Activated T-helper 1 cell treated with anti-CD3 and anti-CD28 coated beads, Interleukin-12 subunit alpha, Interleukin-12 subunit beta, Interleukin-2, Interleukin-4 antibody, amounts not matched to agents 30 ng/mL and 10 ng/mL and 1 ng/mL, durations not matched to agents 14 hours and 24 hours and 36 hours (primary cell): ENCODE measurements at regions of chr1 and their contacts with region 1.

Region 1: GRCh38 chr1:234963180-234963903 is 165.3 kb downstream of the TOMM20 start:
- DNase-seq: peak; percentile 87
- H3K4me3 Mint-ChIP-seq: peak overlapping the region; percentile 73
- H3K27ac Mint-ChIP-seq: peak overlapping the region; percentile 93
- H3K4me1 Mint-ChIP-seq: peaks cover 76% of the 10 kb centered on the region
- H3K27me3 Mint-ChIP-seq: no peaks in the 10 kb centered on the region

Region 2: DNA sequence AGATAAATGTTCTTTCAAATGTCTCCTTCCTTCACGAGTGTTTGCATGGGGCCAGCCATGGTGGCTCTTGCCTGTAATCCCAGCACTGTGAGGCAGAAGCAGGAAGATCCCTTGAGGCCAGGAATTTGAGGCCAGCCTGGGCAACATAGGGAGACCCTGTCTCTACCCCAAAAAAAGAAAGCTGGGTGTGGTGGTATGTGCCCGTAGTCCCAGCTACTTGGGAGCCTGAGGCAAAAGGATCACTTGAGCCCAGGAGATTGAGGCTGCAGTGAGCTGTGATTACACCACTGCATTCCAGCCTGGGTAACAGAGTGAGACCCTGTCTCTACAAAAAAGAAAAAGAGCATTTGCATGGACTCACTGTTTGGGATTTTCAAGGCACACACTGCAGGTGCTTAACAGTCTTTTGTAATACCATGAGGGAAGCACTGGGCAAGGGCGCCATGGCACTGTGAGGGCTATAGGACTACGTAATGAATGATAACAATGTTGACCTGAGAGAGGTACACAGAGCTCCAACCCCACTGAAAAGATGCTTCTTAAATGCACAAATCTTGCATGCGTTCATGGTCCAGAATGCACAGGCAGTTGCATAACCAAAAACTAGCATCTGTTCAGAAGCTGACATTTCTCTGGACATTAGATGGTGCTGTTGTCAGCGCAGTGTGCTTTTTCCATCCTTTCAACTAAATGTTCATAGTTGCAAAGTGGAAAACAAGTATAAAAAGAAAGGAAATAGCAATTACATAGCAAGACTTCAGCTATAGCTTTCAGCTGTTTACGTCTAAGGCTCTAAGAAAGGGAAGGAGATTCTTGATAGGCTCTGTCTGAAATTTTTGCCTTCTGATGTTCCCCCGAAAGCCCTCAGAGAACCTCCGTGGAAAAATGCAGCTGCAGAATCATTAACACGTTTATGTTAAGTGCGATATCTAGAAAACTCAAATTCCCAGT is 476.6 kb before region 1 on chr1:
- intact Hi-C with region 1: loop called (anchors 1 kb)
- DNase-seq: peak; percentile 31
- H3K4me3 Mint-ChIP-seq: peak overlapping the region; percentile 34
- H3K27ac Mint-ChIP-seq: peak overlapping the region; percentile 97
- H3K4me1 Mint-ChIP-seq: peaks cover 49% of the 10 kb centered on the region
- H3K27me3 Mint-ChIP-seq: peaks cover 16% of the 10 kb centered on the region

Region 3: DNA sequence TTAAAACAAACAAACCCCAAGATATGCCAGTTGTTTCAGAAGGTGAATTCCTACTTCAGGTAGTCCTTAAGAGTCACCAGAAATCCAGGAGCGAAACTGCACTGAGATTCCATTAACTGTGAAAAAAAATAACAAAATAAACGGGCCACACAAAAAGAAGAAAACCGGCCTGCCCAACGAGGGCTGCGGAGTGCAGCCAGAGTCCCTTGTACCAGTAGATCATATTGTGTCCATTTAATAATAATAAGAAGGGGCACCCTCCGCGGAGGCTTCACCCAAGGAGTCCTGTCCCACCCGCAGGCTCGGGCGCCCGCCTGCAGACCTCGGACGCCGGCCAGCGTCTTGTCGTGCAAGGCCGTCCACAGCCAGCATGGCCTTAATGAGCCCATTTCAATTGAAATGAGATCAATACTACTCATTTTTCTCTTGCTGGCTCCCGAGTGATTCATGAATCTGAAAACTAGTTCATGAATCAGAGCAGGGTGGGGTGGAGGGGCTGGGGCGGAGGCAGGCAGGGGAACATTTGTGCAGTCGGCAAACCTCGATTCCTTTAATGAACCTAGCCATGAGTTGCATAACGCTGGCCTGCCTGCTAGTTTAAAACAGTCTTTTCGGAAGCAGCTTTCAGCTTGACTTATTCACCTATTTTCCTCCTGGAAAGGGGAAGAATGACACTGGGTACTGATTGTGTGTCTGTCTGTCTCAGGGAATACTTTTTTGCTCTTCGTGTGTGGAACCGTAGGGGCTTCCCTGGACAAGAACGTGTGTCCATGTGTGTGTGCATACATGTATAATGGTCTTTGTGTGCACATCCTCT is 240.2 kb before region 1 on chr1:
- intact Hi-C with region 1: loop called (anchors 1 kb)
- DNase-seq: peak; percentile 7
- H3K4me3 Mint-ChIP-seq: peak overlapping the region; percentile 70
- H3K27ac Mint-ChIP-seq: peak overlapping the region; percentile 97
- H3K4me1 Mint-ChIP-seq: peaks cover 79% of the 10 kb centered on the region
- H3K27me3 Mint-ChIP-seq: peaks cover 5% of the 10 kb centered on the region

Region 4: GRCh38 chr1:234842726-234843641 is 120.4 kb before region 1 on chr1:
- intact Hi-C with region 1: loop called (anchors 1 kb)
- DNase-seq: peak; percentile 67
- H3K4me3 Mint-ChIP-seq: peak overlapping the region; percentile 54
- H3K27ac Mint-ChIP-seq: peak overlapping the region; percentile 90
- H3K4me1 Mint-ChIP-seq: peaks cover 96% of the 10 kb centered on the region
- H3K27me3 Mint-ChIP-seq: peaks cover 3% of the 10 kb centered on the region

Region 5: DNA sequence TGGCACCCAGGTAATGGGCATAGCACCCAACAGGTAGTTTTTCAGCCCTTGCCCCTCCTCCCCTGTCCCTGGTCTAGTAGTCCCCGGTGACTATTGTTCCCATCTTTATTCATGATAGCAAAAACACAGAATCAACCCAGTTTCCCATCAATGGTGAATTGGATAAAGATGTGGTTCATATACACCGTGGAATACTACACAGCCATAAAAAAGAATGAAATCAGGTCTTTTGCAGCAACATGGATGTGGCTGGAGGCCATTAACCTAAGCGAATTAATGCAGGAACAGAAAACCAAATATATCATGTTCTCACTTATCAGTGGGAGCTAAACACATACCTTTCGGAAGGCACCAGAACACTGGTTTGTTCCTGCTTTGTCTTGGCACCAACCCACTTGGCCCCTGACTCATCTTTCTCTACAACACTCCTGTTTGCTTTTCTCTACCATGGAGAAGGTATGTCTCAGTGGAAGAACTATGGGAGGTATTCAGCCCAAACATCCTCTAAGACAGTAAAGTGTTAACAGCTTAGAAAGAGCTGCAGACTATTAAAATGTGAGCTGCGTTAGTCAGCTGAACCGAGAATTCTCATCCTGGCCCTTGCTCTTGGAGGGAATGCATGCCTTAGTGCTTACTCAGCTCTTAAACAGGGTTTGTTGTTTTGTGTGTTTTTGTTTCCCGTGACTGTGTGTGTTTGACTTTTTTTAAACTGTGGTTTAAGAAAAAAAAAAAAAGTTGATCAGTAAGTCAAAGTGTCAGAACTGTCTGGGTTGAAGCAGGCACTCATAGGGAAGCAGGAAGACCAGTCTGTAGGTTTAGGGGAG is 37.7 kb before region 1 on chr1:
- intact Hi-C with region 1: loop called (anchors 1 kb)
- DNase-seq: peak; percentile 17
- H3K4me3 Mint-ChIP-seq: peak overlapping the region; percentile 74
- H3K27ac Mint-ChIP-seq: peak overlapping the region; percentile 97
- H3K4me1 Mint-ChIP-seq: peaks cover 64% of the 10 kb centered on the region
- H3K27me3 Mint-ChIP-seq: no peaks in the 10 kb centered on the region

Region 6: GRCh38 chr1:234978397-234979295 is 15.3 kb after region 1 on chr1:
- intact Hi-C with region 1: loop called (anchors 1 kb)
- DNase-seq: no peak
- H3K4me3 Mint-ChIP-seq: peak overlapping the region; percentile 83
- H3K27ac Mint-ChIP-seq: peak overlapping the region; percentile 92
- H3K4me1 Mint-ChIP-seq: peaks cover 88% of the 10 kb centered on the region
- H3K27me3 Mint-ChIP-seq: no peaks in the 10 kb centered on the region

Region 7: DNA sequence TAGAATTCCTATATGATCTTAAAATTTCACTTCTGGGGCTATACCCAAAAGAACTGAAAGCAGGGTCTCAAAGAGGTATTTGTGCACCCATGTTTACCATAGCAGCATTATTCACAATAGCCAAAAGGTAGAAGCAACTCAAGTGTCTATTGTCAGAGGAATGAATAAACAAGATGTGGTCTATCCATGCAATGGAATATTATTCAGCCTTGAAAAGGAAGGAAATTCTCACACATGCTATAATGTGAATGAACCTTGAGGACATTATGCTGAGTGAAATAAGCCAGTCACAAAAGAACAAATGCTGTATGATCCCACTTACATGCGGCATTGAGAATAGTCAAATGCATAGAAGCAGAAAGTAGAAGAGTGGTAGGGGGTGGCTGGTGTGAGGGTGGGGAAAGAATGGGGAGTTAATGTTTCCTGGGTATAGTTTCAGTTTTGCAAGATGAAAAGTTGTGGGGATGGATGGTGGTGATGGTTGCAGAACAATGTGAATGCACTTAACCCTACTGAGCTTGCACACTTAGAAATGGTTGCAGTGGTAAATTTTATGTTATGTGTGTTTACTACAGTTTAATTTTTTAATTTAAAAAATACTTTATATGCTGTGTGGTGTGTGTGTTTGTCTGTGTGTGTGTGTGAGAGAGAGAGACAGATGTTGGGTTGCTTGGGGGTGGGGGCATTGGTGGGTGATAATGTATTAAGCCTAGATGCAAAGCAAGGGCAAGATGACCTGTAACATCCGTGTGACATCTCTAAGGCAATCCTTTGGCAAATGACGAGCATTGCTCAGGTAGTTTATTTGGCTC is 43.0 kb after region 1 on chr1:
- intact Hi-C with region 1: loop called (anchors 1 kb)
- DNase-seq: peak; percentile 37
- H3K4me3 Mint-ChIP-seq: peak overlapping the region; percentile 20
- H3K27ac Mint-ChIP-seq: peak overlapping the region; percentile 81
- H3K4me1 Mint-ChIP-seq: peaks cover 83% of the 10 kb centered on the region
- H3K27me3 Mint-ChIP-seq: no peaks in the 10 kb centered on the region